ENCODE measurements at regions of chr1 and their contacts with region 1.

Region 1: GRCh38 chr1:156054500-156055280 is at the start of gene LAMTOR2:
- DNase-seq: peak; percentile 98
- H3K4me3 Mint-ChIP-seq: peak within 1 kb of the TSS; percentile 92
- H3K27ac Mint-ChIP-seq: peak within 1 kb of the TSS; percentile 93
- H3K4me1 Mint-ChIP-seq: peaks cover 24% of the 10 kb centered on the region
- H3K27me3 Mint-ChIP-seq: no peaks in the 10 kb centered on the region
- total RNA-seq, gene LAMTOR2: 54.9 to 55.9 TPM

Region 2: GRCh38 chr1:155636397-155637153 is 418.1 kb before region 1 on chr1:
- CTCF ChIA-PET with region 1: no interaction called
- intact Hi-C with region 1: loop called (anchors 10 kb)
- DNase-seq: no peak
- H3K4me3 Mint-ChIP-seq: peak overlapping the region; percentile 94
- H3K27ac Mint-ChIP-seq: peak overlapping the region; percentile 89
- H3K4me1 Mint-ChIP-seq: peaks cover 20% of the 10 kb centered on the region
- H3K27me3 Mint-ChIP-seq: no peaks in the 10 kb centered on the region

Region 3: DNA sequence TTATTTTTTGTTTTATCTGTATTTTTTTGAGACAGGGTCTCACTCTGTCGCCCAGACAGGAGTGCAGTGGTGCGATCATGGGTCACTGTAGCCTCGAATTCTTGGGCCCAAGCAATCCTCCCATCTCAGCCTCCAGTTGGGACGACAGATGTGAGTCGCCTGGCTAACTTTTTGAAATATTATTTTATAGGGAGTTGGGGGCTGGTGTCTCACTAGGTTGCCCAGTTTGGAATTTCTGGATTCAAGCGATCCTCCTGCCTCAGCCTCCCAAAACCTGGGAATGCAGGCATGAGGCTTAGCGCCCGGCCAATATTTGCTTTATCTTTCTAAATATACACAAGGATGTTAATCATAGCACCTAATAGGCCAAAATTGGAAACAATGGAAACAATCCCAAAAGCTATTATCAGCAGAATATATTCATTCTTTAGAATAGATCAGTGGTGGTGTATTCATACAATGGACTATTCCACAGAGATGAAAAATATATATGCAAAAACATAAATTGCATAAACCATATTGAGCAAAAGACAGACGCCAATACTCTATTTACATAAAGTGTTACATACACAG is 309.9 kb before region 1 on chr1:
- CTCF ChIA-PET with region 1: no interaction called
- intact Hi-C with region 1: loop called (anchors 2 kb)
- DNase-seq: no peak
- H3K4me3 Mint-ChIP-seq: peak overlapping the region; percentile 87
- H3K27ac Mint-ChIP-seq: peak overlapping the region; percentile 84
- H3K4me1 Mint-ChIP-seq: peaks cover 6% of the 10 kb centered on the region
- H3K27me3 Mint-ChIP-seq: no peaks in the 10 kb centered on the region

Region 4: GRCh38 chr1:155934097-155934935 is 120.4 kb before region 1 on chr1 and contains the start of gene KHDC4:
- CTCF ChIA-PET with region 1: interaction called, 4 read pairs
- intact Hi-C with region 1: loop called (anchors 1 kb)
- DNase-seq: peak; percentile 97
- H3K4me3 Mint-ChIP-seq: no peak within 1 kb of the TSS
- H3K27ac Mint-ChIP-seq: no peak within 1 kb of the TSS
- H3K4me1 Mint-ChIP-seq: peaks cover 46% of the 10 kb centered on the region
- H3K27me3 Mint-ChIP-seq: no peaks in the 10 kb centered on the region
- total RNA-seq, gene KHDC4: 82.3 to 87.2 TPM

Region 5: DNA sequence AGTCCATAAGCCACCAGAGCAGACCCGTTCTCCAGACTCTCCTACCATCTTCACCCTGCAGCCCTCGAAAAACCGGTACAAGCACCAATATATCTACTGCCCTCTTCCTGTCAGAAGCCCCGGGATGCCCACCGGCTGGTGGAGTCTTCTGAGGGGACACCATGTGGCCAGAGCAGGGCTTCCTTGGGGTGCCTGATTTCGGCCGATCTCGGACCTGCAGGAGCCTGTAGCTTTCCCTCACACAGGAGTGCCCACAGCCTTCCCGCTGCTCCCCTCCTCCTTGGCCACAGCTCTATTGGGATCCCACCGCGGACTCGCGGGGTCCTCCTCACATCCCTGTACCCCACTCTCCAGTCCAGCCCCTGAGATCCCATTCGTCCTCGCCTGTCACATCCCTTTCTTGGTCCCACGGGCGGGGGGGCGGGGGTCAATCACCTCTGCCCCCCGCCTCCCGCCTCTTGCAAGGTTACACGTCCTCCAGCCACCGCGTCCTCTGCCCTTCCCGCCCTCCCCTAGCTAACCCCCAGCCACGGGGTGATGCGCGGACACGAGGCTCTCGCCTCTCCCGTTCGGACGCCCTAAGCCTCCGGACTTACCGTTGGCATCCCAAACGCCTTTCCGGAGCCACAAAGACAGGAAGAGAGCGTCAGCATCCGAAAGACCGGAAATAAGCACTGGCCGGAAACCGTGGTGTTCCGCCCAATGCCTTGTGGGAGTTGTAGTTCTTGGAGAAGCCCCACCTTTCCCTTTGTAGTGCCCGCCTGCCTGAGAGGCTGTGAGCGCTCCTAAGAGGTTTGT is 34.2 kb before region 1 on chr1 and contains the start of gene SSR2:
- CTCF ChIA-PET with region 1: interaction called, 4 read pairs
- intact Hi-C with region 1: loop called (anchors 1 kb)
- DNase-seq: peak; percentile 94
- H3K4me3 Mint-ChIP-seq: peak within 1 kb of the TSS; percentile 84
- H3K27ac Mint-ChIP-seq: peak within 1 kb of the TSS; percentile 91
- H3K4me1 Mint-ChIP-seq: peaks cover 28% of the 10 kb centered on the region
- H3K27me3 Mint-ChIP-seq: no peaks in the 10 kb centered on the region
- total RNA-seq, gene SSR2: 141 to 142 TPM

Region 6: DNA sequence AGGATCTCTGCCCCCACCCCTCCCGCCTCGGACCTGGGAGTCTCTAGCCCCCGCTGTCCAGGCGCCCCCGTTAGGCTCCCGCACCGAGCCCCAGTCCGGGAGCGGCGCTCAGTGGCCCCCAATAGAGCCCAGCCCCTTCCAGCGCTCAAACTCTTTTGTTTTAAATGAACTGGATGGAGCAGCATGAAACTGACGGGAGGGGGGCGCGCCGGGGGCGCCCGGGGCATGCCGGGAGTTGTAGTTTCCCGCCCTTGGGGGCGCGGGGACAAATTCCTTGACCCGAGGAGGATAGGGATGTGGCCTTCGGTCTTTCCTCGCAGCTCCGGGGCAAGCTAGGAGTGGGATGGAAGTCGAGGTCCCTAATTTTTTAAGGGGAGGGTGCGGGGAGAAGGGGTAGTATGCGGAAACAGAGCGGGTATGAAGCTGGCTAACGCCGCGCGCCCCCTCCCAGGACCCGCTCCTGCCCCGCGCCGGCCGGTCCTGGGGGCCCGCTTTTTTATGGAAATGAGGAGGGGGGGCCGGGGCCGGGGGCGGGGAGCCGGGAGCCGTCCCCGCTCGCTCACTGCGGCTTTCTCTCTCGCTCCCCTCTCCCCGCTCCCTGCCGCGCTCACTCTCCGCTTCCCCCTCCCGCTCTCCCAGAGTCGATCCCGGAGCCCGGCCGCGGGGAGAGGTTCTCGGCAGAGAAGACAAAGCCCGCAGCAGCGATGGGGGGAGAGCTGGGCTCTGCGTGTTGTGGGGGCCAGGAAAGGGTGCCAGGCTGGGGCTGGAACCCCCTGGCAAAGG is 27.8 kb after region 1 on chr1 and contains the start of gene MEX3A:
- CTCF ChIA-PET with region 1: no interaction called
- intact Hi-C with region 1: loop called (anchors 1 kb)
- DNase-seq: peak; percentile 61
- H3K4me3 Mint-ChIP-seq: peak within 1 kb of the TSS; percentile 75
- H3K27ac Mint-ChIP-seq: no peak within 1 kb of the TSS
- H3K4me1 Mint-ChIP-seq: peaks cover 5% of the 10 kb centered on the region
- H3K27me3 Mint-ChIP-seq: peaks cover 26% of the 10 kb centered on the region
- total RNA-seq, gene MEX3A: 0.22 to 0.36 TPM

Region 7: DNA sequence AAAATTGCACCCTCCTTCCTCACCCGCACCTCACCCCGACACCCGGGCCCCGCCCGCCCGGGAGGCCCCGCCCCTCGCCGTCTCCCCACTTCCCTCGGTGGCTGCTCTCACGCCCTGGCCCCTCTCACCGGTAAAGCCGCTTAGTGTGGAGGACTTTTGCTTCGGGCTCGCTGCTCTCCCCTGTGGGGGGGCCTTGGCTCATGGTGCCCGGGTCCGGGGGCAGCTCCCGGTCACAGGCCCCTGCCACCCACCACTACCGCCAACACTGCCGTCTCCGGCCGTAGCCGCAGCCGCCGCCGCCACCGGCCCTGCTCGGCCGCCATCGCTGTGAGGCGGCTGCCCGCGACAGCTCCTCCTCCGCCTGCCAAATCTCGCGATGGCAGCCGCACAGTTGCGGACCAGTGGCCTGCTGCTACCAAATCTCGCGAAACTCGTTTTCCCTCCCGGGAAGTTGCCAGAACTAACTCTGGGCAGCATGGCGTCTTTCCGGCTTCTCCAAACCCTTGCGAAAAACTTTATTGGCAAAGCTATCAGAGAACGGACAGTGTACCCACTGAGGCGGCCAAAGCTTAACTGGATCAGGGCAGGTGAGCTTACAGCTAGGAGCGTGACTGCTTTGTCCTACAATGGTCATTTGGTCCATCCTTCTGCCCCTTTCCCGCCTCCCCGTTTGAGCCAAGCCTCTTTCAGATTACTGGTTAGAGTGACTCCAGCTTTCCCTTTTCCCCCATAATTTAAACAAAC is 228.0 kb after region 1 on chr1 and contains the start of gene SMG5:
- CTCF ChIA-PET with region 1: no interaction called
- intact Hi-C with region 1: loop called (anchors 1 kb)
- DNase-seq: peak; percentile 99
- H3K4me3 Mint-ChIP-seq: peak within 1 kb of the TSS; percentile 99
- H3K27ac Mint-ChIP-seq: peak within 1 kb of the TSS; percentile 92
- H3K4me1 Mint-ChIP-seq: peaks cover 27% of the 10 kb centered on the region
- H3K27me3 Mint-ChIP-seq: no peaks in the 10 kb centered on the region
- total RNA-seq, gene SMG5: 77.1 to 83.4 TPM